ENCODE measurements at regions of chr14 and their contacts with region 1.

Region 1: GRCh38 chr14:69611201-69612011 is at the start of gene SUSD6:
- DNase-seq: peak; percentile 88 to 92 (median 90)
- H3K4me3 ChIP-seq: peak within 1 kb of the TSS; percentile 62
- H3K27ac ChIP-seq: peak within 1 kb of the TSS; percentile 87 to 93
- H3K4me1 ChIP-seq: peaks cover 14% of the 10 kb centered on the region
- H3K27me3 ChIP-seq: no peaks in the 10 kb centered on the region
- CTCF ChIP-seq: no peak
- EP300 ChIP-seq: peak; percentile 52
- POLR2A ChIP-seq: peak; percentile 39
- total RNA-seq, gene SUSD6: 18.0 to 35.3 (median 29.9) TPM

Region 2: GRCh38 chr14:69715725-69716477 is 104.5 kb after region 1 on chr14:
- intact Hi-C with region 1: loop called in 1 of 4 experiments (anchors 10 kb)
- DNase-seq: peak; percentile 54 to 75 (median 64)
- H3K4me3 ChIP-seq: no peak overlapping the region
- H3K27ac ChIP-seq: no peak overlapping the region
- H3K4me1 ChIP-seq: peaks cover 15% of the 10 kb centered on the region
- H3K27me3 ChIP-seq: no peaks in the 10 kb centered on the region
- CTCF ChIP-seq: no peak
- EP300 ChIP-seq: no peak
- POLR2A ChIP-seq: no peak

Measured in ovary (tissue), 10 donors.